MCF 10A (cell line): ENCODE measurements at regions of chr1 and their contacts with region 1.

Region 1: DNA sequence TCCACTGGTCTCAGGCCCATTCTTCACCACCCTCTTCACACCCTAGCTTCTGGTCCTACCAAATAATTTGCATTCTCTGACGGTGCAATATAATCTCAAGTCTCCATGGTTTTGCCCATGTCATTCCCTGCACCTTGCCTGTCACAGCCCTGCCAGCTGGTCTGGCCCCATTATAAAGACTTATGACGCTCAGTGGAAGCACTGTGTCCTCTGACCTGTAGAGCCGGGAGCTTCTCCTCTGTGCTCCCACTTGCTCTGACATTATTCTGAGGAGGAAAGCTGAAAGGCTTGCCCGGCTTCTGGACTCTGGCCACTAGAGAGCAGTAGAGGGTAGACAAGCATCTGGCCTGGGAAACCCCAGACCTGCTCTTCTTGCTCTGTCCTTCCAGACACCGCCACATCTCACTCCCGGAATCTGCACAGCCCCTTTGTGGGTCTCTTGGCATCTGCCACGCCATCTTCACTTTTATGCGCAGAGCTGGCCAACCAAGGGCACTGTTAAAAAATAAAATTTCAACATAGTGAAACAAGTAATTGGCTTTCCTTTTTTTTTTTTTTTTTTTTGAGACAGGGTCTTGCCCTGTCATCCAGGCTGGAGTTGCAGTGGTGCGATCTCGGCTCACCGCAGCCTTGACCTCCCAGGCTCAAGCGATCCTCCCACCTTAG is 44.4 kb downstream of the NENF start:
- DNase-seq: peak; percentile 96
- H3K4me3 Mint-ChIP-seq: no peak overlapping the region
- H3K27ac Mint-ChIP-seq: peak overlapping the region; percentile 46
- H3K4me1 Mint-ChIP-seq: peaks cover 17% of the 10 kb centered on the region
- H3K27me3 Mint-ChIP-seq: no peaks in the 10 kb centered on the region
- CTCF ChIP-seq: peak; percentile 99

Region 2: GRCh38 chr1:212007886-212008285 is 469.3 kb before region 1 on chr1:
- CTCF ChIA-PET with region 1: no interaction called
- POLR2A ChIA-PET with region 1: no interaction called
- intact Hi-C with region 1: no loop called
- DNase-seq: no peak
- H3K4me3 Mint-ChIP-seq: no peak overlapping the region
- H3K27ac Mint-ChIP-seq: no peak overlapping the region
- H3K4me1 Mint-ChIP-seq: no peaks in the 10 kb centered on the region
- H3K27me3 Mint-ChIP-seq: no peaks in the 10 kb centered on the region
- CTCF ChIP-seq: no peak

Region 3: DNA sequence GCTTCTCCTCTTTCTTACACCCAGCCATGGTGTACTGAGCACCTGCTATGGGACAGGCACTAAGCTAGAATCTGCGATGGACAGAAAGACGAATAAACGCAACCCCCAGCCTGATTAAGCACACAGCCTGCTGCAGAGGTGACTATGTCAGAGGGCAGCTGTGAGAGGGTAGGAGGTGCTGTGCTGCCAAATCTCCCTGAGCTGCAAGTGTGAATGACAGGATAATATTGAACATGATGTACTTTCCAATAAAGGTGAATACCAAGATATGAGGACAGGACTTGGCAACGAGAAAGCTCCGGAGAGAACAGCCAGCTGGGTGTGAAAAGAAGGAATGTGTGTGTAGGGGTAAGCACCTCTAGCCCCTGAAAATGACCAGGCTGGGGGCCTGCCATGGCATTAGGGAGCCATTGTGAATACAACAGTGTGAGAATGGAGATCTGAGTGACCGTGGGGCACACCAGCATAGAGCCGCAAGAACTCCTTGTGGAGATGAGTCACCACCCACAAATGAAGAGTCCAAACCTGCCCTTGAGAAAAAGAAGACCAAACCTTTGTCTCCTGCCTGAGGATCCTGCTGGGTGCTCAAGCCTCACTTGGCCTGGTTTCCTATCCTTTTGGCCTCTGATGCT is 48.4 kb after region 1 on chr1:
- CTCF ChIA-PET with region 1: interaction called, 21 read pairs
- POLR2A ChIA-PET with region 1: interaction called, 3 read pairs
- intact Hi-C with region 1: no loop called
- DNase-seq: peak; percentile 51
- H3K4me3 Mint-ChIP-seq: no peak overlapping the region
- H3K27ac Mint-ChIP-seq: no peak overlapping the region
- H3K4me1 Mint-ChIP-seq: peaks cover 10% of the 10 kb centered on the region
- H3K27me3 Mint-ChIP-seq: peaks cover 17% of the 10 kb centered on the region
- CTCF ChIP-seq: no peak

Region 4: DNA sequence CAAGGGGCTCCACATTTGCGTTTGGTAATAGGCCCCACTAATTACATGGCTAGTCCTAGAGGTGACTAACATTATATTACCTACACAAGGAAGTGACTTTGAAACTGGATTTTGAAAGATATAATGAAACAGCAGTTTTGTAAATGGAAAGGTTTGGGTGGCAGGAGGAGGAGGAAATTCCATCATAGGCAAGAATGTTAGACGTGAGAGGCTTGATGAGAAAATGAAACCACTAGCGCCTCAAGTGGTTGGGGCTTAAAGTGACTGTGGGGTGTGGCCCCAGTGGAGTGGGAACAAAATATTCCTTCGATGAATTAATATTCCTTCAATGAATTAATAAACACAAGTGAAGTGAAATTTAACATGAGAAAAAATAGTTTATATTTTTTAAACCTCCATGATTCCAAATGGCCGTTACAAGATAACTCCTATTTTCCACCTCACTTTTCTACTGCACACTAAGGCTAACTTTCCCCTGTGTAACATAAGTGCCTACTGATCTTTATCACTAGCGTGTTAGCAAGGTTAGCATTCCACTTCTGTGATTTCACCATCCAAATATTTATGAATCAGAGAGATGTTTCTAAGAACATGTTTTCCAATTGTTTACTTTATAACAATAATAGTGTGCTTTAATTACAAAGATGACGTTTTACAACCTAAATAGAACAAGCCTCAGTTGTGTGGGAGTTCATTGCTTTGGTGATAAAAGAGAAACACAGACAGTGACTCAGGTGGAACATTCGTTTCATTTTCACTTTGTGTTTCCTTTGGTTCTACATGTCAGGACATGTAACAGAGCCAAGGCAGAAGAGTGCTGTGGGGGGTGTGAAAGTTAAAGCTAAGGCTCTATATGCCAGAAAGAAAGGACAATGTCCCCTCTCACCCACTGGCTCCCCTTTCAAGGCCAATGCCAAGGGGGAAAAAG is 118.9 kb after region 1 on chr1:
- CTCF ChIA-PET with region 1: interaction called, 41 read pairs
- POLR2A ChIA-PET with region 1: interaction called, 8 read pairs
- intact Hi-C with region 1: loop called (anchors 1 kb)
- DNase-seq: peak; percentile 97
- H3K4me3 Mint-ChIP-seq: peak overlapping the region; percentile 69
- H3K27ac Mint-ChIP-seq: peak overlapping the region; percentile 100
- H3K4me1 Mint-ChIP-seq: peaks cover 27% of the 10 kb centered on the region
- H3K27me3 Mint-ChIP-seq: peaks cover 30% of the 10 kb centered on the region
- CTCF ChIP-seq: peak; percentile 97

Region 5: GRCh38 chr1:212641956-212642355 is 164.8 kb after region 1 on chr1:
- CTCF ChIA-PET with region 1: interaction called, 13 read pairs
- POLR2A ChIA-PET with region 1: no interaction called
- intact Hi-C with region 1: no loop called
- DNase-seq: no peak
- H3K4me3 Mint-ChIP-seq: no peak overlapping the region
- H3K27ac Mint-ChIP-seq: no peak overlapping the region
- H3K4me1 Mint-ChIP-seq: peaks cover 8% of the 10 kb centered on the region
- H3K27me3 Mint-ChIP-seq: peaks cover 55% of the 10 kb centered on the region
- CTCF ChIP-seq: no peak

Region 6: DNA sequence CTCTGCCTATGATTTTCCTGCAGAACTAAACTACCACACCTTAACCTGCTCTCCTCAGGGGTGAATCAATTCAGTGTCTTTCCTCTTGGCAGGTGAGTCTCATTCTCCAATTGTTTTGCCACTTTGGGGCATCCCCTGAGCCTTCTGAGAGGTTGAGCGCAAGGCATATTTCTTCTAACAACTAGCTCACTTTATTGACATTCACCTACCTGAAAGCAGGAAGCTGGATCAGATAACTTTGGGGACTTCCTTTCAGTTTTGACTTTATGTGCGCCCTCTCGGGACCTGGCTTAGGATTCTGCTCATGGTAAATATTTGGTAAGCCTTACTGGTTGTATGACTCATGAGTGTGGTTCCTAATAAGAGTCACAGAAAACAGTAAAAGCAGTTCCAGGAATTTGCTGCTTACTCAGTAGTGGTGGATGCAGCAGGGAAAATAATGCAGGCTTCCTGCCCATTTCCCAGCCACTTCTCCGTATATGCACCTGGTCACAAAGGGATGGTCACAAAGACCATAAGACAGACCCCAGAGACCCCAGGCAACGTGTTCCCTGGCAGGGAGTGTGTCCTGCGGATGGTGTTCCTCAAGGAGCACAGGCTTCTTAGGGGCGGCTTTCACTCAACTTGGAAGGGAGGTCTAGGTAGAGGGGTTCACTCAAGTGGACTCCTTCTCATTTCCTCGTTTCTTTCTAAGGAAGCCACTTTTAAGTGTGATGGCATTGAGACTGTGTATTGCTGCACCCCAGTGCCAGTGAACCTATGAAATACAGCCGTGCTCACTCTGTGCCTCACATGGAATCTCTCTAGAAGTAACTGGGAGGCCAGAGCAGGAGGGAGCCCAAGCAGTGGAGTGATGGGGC is 244.5 kb after region 1 on chr1:
- CTCF ChIA-PET with region 1: interaction called, 22 read pairs
- POLR2A ChIA-PET with region 1: interaction called, 7 read pairs
- intact Hi-C with region 1: loop called (anchors 1 kb)
- DNase-seq: peak; percentile 91
- H3K4me3 Mint-ChIP-seq: peak overlapping the region; percentile 51
- H3K27ac Mint-ChIP-seq: peak overlapping the region; percentile 21
- H3K4me1 Mint-ChIP-seq: peaks cover 18% of the 10 kb centered on the region
- H3K27me3 Mint-ChIP-seq: peaks cover 24% of the 10 kb centered on the region
- CTCF ChIP-seq: no peak

Region 7: GRCh38 chr1:212782422-212783154 is 305.4 kb after region 1 on chr1:
- CTCF ChIA-PET with region 1: interaction called, 147 read pairs
- POLR2A ChIA-PET with region 1: interaction called, 7 read pairs
- intact Hi-C with region 1: loop called (anchors 1 kb)
- DNase-seq: peak; percentile 58
- H3K4me3 Mint-ChIP-seq: no peak overlapping the region
- H3K27ac Mint-ChIP-seq: peak overlapping the region; percentile 57
- H3K4me1 Mint-ChIP-seq: peaks cover 7% of the 10 kb centered on the region
- H3K27me3 Mint-ChIP-seq: no peaks in the 10 kb centered on the region
- CTCF ChIP-seq: peak; percentile 84